Activated naive CD4-positive, alpha-beta T cell treated with anti-CD3 and anti-CD28 coated beads for 36 hours (primary cell): ENCODE measurements at regions of chr6 and their contacts with region 1.

Region 1: GRCh38 chr6:109491207-109491938 is 8.4 kb upstream of the ZBTB24 start:
- DNase-seq: peak; percentile 25
- H3K4me3 Mint-ChIP-seq: no peak overlapping the region
- H3K27ac Mint-ChIP-seq: peak overlapping the region; percentile 25
- H3K4me1 Mint-ChIP-seq: peaks cover 25% of the 10 kb centered on the region
- H3K27me3 Mint-ChIP-seq: no peaks in the 10 kb centered on the region

Region 2: DNA sequence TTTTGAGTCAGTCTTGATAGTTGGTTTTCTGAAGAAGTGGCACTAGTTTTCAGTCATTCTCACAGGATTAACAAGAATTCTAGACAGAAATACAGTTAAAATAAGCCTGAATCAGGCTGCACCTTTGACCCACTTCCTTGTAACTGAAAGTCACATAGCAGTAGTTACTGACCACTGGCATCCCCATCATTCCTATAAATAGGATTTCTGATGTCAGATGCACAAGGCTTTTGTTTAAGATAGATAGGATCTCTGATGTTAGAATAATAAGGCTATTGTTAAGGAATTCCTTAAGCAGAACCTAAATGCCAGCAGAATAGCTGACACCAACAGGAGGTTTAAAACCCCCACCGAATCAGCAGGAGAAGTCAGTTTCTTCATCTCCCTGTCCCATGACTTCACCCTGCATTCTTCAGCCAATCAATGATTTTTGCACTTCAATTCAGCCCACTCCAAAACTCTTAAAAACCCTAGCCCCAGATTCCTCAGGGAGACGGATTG is 22.2 kb after region 1 on chr6:
- CTCF ChIA-PET with region 1: no interaction called
- intact Hi-C with region 1: loop called (anchors 2 kb)
- DNase-seq: no peak
- H3K4me3 Mint-ChIP-seq: no peak overlapping the region
- H3K27ac Mint-ChIP-seq: no peak overlapping the region
- H3K4me1 Mint-ChIP-seq: peaks cover 22% of the 10 kb centered on the region
- H3K27me3 Mint-ChIP-seq: no peaks in the 10 kb centered on the region

Region 3: GRCh38 chr6:109655761-109656262 is 164.4 kb after region 1 on chr6:
- CTCF ChIA-PET with region 1: no interaction called
- intact Hi-C with region 1: no loop called
- DNase-seq: no peak
- H3K4me3 Mint-ChIP-seq: no peak overlapping the region
- H3K27ac Mint-ChIP-seq: no peak overlapping the region
- H3K4me1 Mint-ChIP-seq: peaks cover 8% of the 10 kb centered on the region
- H3K27me3 Mint-ChIP-seq: no peaks in the 10 kb centered on the region

Region 4: GRCh38 chr6:109695468-109695867 is 204.1 kb after region 1 on chr6:
- CTCF ChIA-PET with region 1: no interaction called
- intact Hi-C with region 1: no loop called
- DNase-seq: peak; percentile 55
- H3K4me3 Mint-ChIP-seq: no peak overlapping the region
- H3K27ac Mint-ChIP-seq: no peak overlapping the region
- H3K4me1 Mint-ChIP-seq: peaks cover 7% of the 10 kb centered on the region
- H3K27me3 Mint-ChIP-seq: no peaks in the 10 kb centered on the region